OCI-LY7 (cell line): ENCODE measurements at regions of chr2 and their contacts with region 1.

Region 1: DNA sequence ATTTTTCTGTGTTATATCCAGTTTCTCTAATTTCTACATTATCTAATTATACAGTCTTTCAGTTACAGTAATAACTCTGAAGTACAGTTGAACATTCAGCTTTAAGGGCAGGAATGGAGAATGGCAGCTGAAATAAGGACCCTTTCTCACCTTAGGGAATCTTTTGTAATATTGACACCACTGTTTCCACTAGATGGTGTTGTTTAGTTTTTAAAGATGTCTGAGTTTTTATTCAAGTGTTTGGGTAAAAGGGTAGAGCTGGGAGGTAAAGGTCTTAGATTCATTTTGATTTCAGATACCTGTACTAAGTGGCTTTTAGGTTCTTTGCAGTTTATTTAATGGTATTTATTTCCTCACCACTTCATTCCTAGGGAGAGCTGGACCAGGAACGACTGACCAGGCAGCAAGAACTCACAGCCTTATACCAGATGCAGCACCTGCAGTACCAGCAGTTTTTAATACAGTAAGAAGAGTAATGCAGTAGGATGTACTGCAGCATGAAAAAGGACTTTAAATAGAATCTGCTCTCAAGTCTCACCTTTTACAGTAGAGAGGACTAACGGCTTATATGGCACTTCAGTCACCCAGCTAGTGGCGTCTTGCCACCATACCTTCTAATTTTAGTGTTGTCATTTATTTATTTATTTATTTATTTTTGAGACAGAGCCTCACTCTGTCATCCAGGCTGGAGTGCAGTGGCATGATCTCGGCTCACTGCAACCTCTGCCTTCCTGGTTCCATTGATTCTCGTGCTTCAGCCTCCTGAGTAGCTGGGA is 33.2 kb upstream of the KCNJ13 start:
- DNase-seq: peak; percentile 31
- H3K4me3 ChIP-seq: no peak overlapping the region
- H3K27ac ChIP-seq: no peak overlapping the region
- H3K4me1 ChIP-seq: peaks cover 8% of the 10 kb centered on the region
- CTCF ChIP-seq: peak; percentile 74

Region 2: GRCh38 chr2:232521959-232522622 is 287.4 kb before region 1 on chr2:
- CTCF ChIA-PET with region 1: no interaction called
- POLR2A ChIA-PET with region 1: no interaction called
- intact Hi-C with region 1: no loop called
- DNase-seq: peak; percentile 50
- H3K4me3 ChIP-seq: no peak overlapping the region
- H3K27ac ChIP-seq: no peak overlapping the region
- H3K4me1 ChIP-seq: no peaks in the 10 kb centered on the region
- CTCF ChIP-seq: peak; percentile 80

Region 3: GRCh38 chr2:232757905-232758304 is 51.6 kb before region 1 on chr2:
- CTCF ChIA-PET with region 1: no interaction called
- POLR2A ChIA-PET with region 1: no interaction called
- intact Hi-C with region 1: no loop called
- DNase-seq: no peak
- H3K4me3 ChIP-seq: no peak overlapping the region
- H3K27ac ChIP-seq: no peak overlapping the region
- H3K4me1 ChIP-seq: no peaks in the 10 kb centered on the region
- CTCF ChIP-seq: no peak

Region 4: DNA sequence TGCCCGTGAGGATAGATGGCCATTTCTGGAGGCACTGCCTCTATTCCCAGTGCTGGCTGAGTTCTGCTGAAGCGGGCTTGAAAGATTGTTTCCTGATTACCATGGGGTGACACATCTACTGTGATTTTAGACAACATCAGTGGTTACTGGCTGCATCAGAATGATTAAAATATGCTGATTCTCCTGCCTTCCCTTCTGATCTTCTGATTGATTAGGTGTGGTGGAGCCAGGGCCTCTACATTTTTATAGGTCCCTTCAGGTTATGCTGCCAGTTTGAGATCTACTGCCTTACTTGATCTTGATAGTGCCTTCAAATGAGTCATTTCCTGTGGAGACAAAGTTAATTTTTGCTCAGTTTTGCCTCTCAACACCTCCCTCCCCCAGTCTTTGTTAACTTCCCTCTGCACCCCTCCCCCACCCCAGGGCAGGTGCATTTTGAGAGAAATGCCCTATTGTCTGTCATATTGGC is 28.9 kb after region 1 on chr2:
- CTCF ChIA-PET with region 1: no interaction called
- POLR2A ChIA-PET with region 1: interaction called, 5 read pairs
- intact Hi-C with region 1: loop called (anchors 2 kb)
- DNase-seq: peak; percentile 90
- H3K4me3 ChIP-seq: peak overlapping the region; percentile 32
- H3K27ac ChIP-seq: peak overlapping the region; percentile 85
- H3K4me1 ChIP-seq: peaks cover 39% of the 10 kb centered on the region
- CTCF ChIP-seq: no peak